ENCODE measurements at regions of chr1 and their contacts with region 1.

Region 1: DNA sequence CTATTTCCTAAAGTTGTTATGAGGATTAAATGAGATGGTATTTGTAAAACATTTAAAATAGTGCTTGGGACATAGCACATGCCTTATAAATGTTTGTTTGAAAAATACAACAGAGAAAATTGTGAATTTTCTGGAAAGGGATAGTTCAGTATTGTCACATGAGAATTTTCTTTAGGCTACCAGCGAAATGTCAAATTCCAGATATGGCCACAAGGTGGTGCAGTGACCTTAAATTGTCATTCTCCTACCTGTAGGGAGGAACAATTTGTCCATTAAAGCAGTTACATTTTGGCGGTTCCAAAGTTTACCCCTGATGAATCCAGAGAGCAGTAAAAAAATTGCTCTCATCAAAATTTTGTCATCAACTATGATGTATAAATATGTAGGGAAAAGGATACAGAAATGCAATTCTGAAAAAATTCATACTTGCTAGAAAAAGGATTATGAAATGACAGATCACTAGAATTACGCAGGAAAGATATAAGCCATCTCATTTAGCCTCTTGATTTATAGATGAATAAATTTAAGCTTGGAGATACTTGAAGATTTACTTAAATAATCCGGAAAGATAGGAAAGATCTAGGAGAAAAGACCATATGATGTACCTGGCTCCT is 50.2 kb upstream of the TSHB start:
- DNase-seq: peak; percentile 53 to 84 (median 66)
- ATAC-seq: peak; percentile 60
- H3K4me3 ChIP-seq: no peak overlapping the region
- H3K4me3 Mint-ChIP-seq: no peak overlapping the region
- H3K27ac ChIP-seq: no peak overlapping the region
- H3K27ac Mint-ChIP-seq: no peak overlapping the region
- H3K4me1 ChIP-seq: no peaks in the 10 kb centered on the region
- H3K4me1 Mint-ChIP-seq: no peaks in the 10 kb centered on the region
- H3K27me3 ChIP-seq: peaks cover 0 to 9% of the 10 kb centered on the region in 2 experiments
- H3K27me3 Mint-ChIP-seq: peaks cover 15% of the 10 kb centered on the region
- CTCF ChIP-seq: peak; percentile 96

Region 2: GRCh38 chr1:115112496-115113375 is 133.4 kb after region 1 on chr1:
- CTCF ChIA-PET with region 1: interaction called, 16 read pairs
- POLR2A ChIA-PET with region 1: interaction called, 3 read pairs
- intact Hi-C with region 1: loop called (anchors 1 kb)
- DNase-seq: peak; percentile 26 to 77 (median 53)
- ATAC-seq: peak; percentile 54
- H3K4me3 ChIP-seq: no peak overlapping the region
- H3K4me3 Mint-ChIP-seq: no peak overlapping the region
- H3K27ac ChIP-seq: no peak overlapping the region
- H3K27ac Mint-ChIP-seq: no peak overlapping the region
- H3K4me1 ChIP-seq: peaks cover 20% of the 10 kb centered on the region
- H3K4me1 Mint-ChIP-seq: peaks cover 14% of the 10 kb centered on the region
- H3K27me3 ChIP-seq: no peaks in the 10 kb centered on the region
- H3K27me3 Mint-ChIP-seq: no peaks in the 10 kb centered on the region
- CTCF ChIP-seq: peak; percentile 99

Region 3: GRCh38 chr1:115595279-115596079 is 616.1 kb after region 1 on chr1:
- CTCF ChIA-PET with region 1: no interaction called
- POLR2A ChIA-PET with region 1: no interaction called
- intact Hi-C with region 1: loop called (anchors 2 to 10 kb)
- DNase-seq: peak; percentile 15 to 68 (median 39)
- ATAC-seq: peak; percentile 51
- H3K4me3 ChIP-seq: no peak overlapping the region
- H3K4me3 Mint-ChIP-seq: no peak overlapping the region
- H3K27ac ChIP-seq: no peak overlapping the region
- H3K27ac Mint-ChIP-seq: no peak overlapping the region
- H3K4me1 ChIP-seq: no peaks in the 10 kb centered on the region
- H3K4me1 Mint-ChIP-seq: no peaks in the 10 kb centered on the region
- H3K27me3 ChIP-seq: no peaks in the 10 kb centered on the region
- H3K27me3 Mint-ChIP-seq: no peaks in the 10 kb centered on the region
- CTCF ChIP-seq: peak; percentile 67